Aorta (tissue), 5 donors: ENCODE measurements at regions of chr2 and their contacts with region 1.

Region 1: DNA sequence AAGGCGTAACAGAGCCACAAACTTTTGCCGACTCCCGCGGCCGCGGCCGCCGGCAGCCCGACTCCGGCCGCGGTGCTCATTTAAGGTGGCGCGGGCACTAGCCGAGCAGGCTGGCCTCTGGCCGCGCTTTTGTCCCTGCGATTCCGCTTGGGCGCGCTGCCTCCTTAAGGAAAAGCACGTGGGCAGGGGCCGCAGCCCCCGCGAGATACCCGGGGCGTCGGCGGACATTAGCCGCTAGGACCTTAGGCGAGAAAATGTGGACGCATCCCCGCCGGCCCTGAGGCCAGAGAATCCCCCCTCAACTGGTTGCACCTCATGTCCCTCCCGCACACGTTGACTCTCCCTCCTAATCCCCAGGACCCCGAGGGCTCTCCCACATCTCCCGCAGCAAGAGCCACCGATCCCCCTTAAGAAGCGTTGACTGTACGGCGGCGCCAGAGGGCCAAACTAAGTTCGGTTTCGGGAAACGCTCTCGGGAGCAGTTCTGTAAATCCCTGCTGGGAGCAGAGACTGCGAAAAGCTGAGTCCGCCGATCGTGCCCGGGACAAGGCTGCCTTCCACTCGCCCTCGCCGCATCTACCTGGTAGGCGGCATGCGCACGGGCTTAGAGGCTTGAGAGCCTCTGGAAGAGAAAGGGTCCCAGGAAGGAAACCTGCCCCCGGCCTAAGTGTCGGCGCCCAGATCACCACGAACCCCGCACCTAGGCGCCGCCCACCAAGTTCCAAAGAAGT is 1.7 kb upstream of the SATB2 start:
- DNase-seq: peak; percentile 95 to 98
- ATAC-seq: peak; percentile 92
- H3K4me3 ChIP-seq: peak overlapping the region; percentile 50 to 75
- H3K27ac ChIP-seq: peak overlapping the region in 1 of 2 donors; percentile 15
- H3K4me1 ChIP-seq: no peaks in the 10 kb centered on the region
- H3K27me3 ChIP-seq: no peaks in the 10 kb centered on the region

Region 2: DNA sequence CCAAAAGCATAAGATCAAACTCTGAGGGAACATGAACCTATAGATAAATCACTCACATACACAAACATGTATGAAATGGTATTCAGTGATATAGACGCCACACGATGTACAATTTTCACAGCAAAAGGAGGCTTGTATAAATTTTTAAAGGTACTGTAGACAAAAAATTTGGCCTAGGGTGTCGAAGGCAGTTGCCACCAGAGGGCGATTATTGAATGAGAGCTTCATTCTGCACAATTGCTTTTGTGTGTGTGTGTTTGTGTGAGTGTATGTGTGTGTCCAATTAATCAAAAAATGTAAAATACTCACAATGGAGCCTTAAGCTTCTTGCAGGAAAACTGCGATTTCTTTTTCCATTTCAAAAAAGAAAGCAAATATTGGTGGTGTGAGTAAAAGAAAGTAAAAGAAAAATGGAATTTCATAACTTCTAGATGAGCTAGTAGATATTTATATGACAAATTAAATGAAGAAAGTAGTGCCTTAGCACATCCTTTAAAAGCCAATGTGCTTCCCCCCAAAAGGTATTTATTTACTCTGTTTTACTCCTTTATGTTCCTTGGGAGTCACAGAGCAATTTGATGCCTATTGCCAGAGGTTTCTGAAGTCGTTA is 801.8 kb before region 1 on chr2:
- intact Hi-C with region 1: loop called in 1 of 2 experiments (anchors 5 kb)
- DNase-seq: peak in 1 of 2 donors; percentile 46
- ATAC-seq: no peak
- H3K4me3 ChIP-seq: no peak overlapping the region
- H3K27ac ChIP-seq: no peak overlapping the region
- H3K4me1 ChIP-seq: no peaks in the 10 kb centered on the region
- H3K27me3 ChIP-seq: no peaks in the 10 kb centered on the region

Region 3: DNA sequence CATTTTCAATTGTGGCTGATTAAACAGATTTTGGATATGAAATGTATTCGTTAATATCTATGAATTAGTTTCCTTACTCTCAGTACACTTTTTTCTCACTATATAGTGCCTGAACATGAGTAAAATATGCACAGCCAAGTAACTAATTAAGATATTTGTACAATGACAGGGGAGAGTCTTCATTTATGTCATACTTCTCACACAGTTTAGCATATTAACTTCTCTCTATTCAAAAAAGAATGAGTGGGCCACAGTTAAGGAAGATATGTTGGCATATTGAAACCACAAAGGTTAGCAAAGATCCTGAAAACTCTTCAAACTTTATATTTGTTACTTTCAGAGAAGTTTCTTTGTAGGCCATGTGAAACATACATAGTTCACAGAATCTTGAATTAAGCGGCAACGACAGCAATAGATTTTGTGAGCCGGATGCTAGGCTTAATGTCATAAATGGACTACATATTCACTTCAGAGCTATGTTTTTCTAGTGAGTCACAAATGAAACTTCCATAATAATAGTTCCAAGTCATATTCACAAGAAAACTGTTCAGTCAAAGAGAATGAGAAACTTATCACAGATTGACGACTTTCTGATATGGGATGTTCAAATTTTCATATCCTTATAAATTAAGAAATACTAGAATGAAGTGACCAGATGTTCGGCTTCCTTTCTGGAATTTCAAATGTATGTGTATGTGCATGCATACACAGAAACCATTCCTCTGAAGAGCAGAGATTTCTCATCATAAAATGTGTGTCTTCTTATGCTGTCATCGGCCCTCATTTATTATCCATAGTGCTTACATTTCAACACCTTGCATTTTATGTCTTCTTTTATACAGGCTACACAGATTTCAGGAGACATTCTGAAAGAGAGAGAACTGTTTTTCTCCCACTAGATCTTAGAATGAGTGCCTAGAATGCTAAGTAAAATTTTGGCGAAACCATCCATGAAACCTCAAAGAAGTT is 585.7 kb before region 1 on chr2:
- intact Hi-C with region 1: loop called (anchors 10 kb)
- DNase-seq: no peak
- ATAC-seq: peak; percentile 62
- H3K4me3 ChIP-seq: no peak overlapping the region
- H3K27ac ChIP-seq: peak overlapping the region in 1 of 2 donors; percentile 29
- H3K4me1 ChIP-seq: peaks cover 4 to 8% of the 10 kb centered on the region in 2 donors
- H3K27me3 ChIP-seq: no peaks in the 10 kb centered on the region

Region 4: GRCh38 chr2:199303728-199304177 is 155.7 kb before region 1 on chr2:
- intact Hi-C with region 1: loop called (anchors 2 to 5 kb)
- DNase-seq: peak; percentile 70 to 76
- ATAC-seq: peak; percentile 79
- H3K4me3 ChIP-seq: no peak overlapping the region
- H3K27ac ChIP-seq: peak overlapping the region; percentile 62 to 76
- H3K4me1 ChIP-seq: peaks cover 0 to 7% of the 10 kb centered on the region in 2 donors
- H3K27me3 ChIP-seq: no peaks in the 10 kb centered on the region

Region 5: DNA sequence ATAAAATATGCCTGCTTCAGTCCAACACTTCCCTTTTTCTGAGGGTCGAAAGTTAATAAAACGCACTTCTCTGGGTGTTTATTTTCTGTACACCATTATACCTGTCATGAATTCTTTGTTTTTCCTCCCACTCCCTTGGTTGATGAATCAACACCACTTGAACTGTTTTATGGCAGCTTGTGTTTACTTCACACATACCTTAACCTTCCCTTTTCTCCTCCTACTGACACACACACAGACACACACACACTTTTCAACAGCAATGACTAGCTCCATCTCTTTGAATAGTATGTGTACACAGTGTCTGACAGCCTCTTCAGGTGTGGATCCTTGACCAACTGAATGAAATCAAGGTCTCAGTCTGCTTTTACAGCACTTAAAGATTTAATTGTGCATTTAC is 93.0 kb before region 1 on chr2:
- intact Hi-C with region 1: no loop called
- DNase-seq: no peak
- ATAC-seq: no peak
- H3K4me3 ChIP-seq: no peak overlapping the region
- H3K27ac ChIP-seq: no peak overlapping the region
- H3K4me1 ChIP-seq: no peaks in the 10 kb centered on the region
- H3K27me3 ChIP-seq: no peaks in the 10 kb centered on the region

Region 6: GRCh38 chr2:199830531-199830930 is 371.1 kb after region 1 on chr2:
- intact Hi-C with region 1: no loop called
- DNase-seq: no peak
- ATAC-seq: no peak
- H3K4me3 ChIP-seq: no peak overlapping the region
- H3K27ac ChIP-seq: no peak overlapping the region
- H3K4me1 ChIP-seq: no peaks in the 10 kb centered on the region
- H3K27me3 ChIP-seq: peaks cover 0 to 3% of the 10 kb centered on the region in 2 donors

Region 7: GRCh38 chr2:199940373-199940772 is 480.9 kb after region 1 on chr2:
- intact Hi-C with region 1: no loop called
- DNase-seq: no peak
- ATAC-seq: no peak
- H3K4me3 ChIP-seq: no peak overlapping the region
- H3K27ac ChIP-seq: no peak overlapping the region
- H3K4me1 ChIP-seq: no peaks in the 10 kb centered on the region
- H3K27me3 ChIP-seq: no peaks in the 10 kb centered on the region